Body of pancreas (tissue), 4 donors: ENCODE measurements at regions of chr22 and their contacts with region 1.

Region 1: GRCh38 chr22:19970479-19971275 is 29.1 kb upstream of the TXNRD2 start:
- DNase-seq: peak; percentile 65 to 75 (median 71)
- ATAC-seq: peak; percentile 73
- H3K4me3 ChIP-seq: no peak overlapping the region
- H3K27ac ChIP-seq: no peak overlapping the region
- H3K4me1 ChIP-seq: no peaks in the 10 kb centered on the region
- H3K27me3 ChIP-seq: no peaks in the 10 kb centered on the region
- CTCF ChIP-seq: peak; percentile 73 to 97 (median 85)
- POLR2A ChIP-seq: peak in 1 of 3 donors; percentile 14

Region 2: GRCh38 chr22:20079745-20080444 is 109.2 kb after region 1 on chr22 and contains the start of gene DGCR8:
- intact Hi-C with region 1: no loop called
- DNase-seq: peak; percentile 93 to 96 (median 94)
- ATAC-seq: peak; percentile 96
- H3K4me3 ChIP-seq: peak within 1 kb of the TSS; percentile 34 to 58
- H3K27ac ChIP-seq: peak within 1 kb of the TSS; percentile 72 to 91 (median 84)
- H3K4me1 ChIP-seq: peaks cover 48% of the 10 kb centered on the region
- H3K27me3 ChIP-seq: no peaks in the 10 kb centered on the region
- CTCF ChIP-seq: peak in 3 of 7 experiments; percentile 1 to 21 (median 9)
- POLR2A ChIP-seq: peak; percentile 41 to 76 (median 75)
- total RNA-seq, gene DGCR8: 25.7 to 53.4 TPM

Region 3: GRCh38 chr22:20121856-20122415 is 151.3 kb after region 1 on chr22:
- intact Hi-C with region 1: loop called (anchors 5 kb)
- DNase-seq: no peak
- ATAC-seq: no peak
- H3K4me3 ChIP-seq: no peak overlapping the region
- H3K27ac ChIP-seq: no peak overlapping the region
- H3K4me1 ChIP-seq: peaks cover 20% of the 10 kb centered on the region
- H3K27me3 ChIP-seq: no peaks in the 10 kb centered on the region
- CTCF ChIP-seq: no peak
- POLR2A ChIP-seq: no peak

Region 4: DNA sequence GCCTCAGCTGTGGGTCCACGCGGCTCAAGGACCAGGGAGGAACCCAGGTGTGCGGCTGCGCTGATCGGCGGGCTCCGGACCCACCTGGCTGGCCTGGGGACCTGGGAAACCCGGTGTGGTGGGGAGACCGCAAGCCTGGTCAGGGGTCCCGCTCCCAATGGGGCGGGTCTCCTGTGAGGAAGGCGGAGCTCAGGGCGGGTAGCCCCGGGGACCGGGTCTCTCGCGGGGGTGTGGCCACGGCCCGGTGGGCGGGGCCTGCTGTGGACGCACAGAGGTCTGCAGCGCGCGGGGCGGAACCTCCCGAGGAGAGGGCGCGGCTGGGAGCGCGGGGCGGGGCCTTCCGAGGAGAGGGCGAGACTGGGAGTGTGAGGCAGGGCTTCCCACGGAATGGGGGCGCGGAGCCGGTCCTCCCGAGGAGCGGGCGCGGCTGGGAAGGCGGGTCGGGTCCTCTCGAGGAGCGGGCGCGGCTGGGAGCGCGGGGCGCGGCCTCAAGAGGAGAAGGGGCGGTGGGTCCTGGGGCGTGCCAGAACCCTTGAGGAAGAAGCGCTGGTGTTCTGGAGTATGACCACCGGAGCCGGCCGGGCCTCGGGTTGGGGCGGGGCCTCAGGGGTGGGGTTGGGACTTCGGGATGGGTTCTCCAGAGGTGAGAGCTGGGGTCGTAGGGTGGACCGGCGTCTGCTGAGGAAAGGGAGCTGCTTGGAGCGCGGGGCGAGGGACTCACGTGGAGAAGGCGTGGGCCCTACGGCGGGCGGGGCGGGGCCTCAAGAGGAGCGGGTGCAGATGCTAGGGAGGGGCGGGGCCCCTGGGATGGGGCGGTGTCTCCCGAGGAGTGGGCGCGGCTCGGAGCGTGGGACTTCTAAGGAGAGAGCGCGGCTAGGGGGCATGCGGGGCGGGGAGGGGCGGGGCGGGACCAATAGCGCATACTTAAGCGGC is 328.4 kb after region 1 on chr22:
- intact Hi-C with region 1: loop called (anchors 10 kb)
- DNase-seq: peak; percentile 85 to 95 (median 88)
- ATAC-seq: peak; percentile 86
- H3K4me3 ChIP-seq: peak overlapping the region; percentile 24 to 27
- H3K27ac ChIP-seq: peak overlapping the region in 2 of 4 donors; percentile 11 to 63
- H3K4me1 ChIP-seq: peaks cover 14% of the 10 kb centered on the region
- H3K27me3 ChIP-seq: no peaks in the 10 kb centered on the region
- CTCF ChIP-seq: no peak
- POLR2A ChIP-seq: peak in 1 of 3 donors; percentile 18